PC-3 (cell line): ENCODE measurements at regions of chr7 and their contacts with region 1.

Region 1: GRCh38 chr7:114426382-114427223 is 12.0 kb downstream of the FOXP2 start:
- DNase-seq: peak; percentile 37
- ATAC-seq: peak; percentile 65; the same call in 1 of the 2 replicates
- H3K4me3 ChIP-seq: no peak overlapping the region
- H3K27ac ChIP-seq: no peak overlapping the region
- H3K4me1 ChIP-seq: no peaks in the 10 kb centered on the region
- H3K27me3 ChIP-seq: peaks cover 41% of the 10 kb centered on the region
- CTCF ChIP-seq: peak; percentile 53

Region 2: DNA sequence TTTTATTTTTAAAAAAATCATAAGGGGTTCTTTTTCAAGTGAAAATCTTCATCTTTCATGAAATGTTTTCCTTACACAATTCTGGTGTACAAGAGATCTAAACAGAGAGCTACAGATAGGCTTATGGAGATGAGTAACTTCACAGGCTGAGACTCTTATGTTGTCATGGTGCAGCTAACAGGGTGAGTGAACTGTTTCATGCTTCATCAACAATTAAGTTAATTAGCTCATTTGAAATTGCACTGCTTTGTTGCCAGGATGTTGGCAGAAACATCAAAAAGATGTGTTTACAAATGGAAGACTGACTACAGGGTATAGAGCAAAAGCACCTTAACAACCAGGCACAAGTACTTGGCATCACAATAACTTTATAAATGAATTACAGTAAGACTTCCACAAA is 218.8 kb after region 1 on chr7:
- CTCF ChIA-PET with region 1: no interaction called
- POLR2A ChIA-PET with region 1: no interaction called
- intact Hi-C with region 1: no loop called
- DNase-seq: no peak
- ATAC-seq: no peak
- H3K4me3 ChIP-seq: no peak overlapping the region
- H3K27ac ChIP-seq: no peak overlapping the region
- H3K4me1 ChIP-seq: no peaks in the 10 kb centered on the region
- H3K27me3 ChIP-seq: peaks cover 40% of the 10 kb centered on the region
- CTCF ChIP-seq: no peak

Region 3: DNA sequence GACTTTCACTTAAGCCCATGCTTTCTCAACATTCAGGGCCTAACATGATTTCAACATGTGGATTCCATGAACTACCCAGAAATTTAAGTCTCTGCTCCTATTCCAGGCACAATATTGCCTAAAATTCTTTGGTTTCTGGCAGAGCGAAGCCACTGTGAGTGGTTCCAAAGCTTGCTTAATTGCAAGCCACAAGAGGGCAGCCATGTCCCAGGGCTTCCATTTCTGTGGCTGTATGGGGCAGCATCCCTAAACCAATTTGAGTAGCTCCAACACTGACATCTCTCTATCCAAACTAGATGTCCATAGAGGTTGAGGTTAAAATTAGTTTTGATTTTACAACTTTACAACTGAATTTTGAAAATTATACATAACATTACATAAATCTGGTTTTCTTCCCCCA is 439.0 kb after region 1 on chr7:
- CTCF ChIA-PET with region 1: interaction called, 3 read pairs
- POLR2A ChIA-PET with region 1: no interaction called
- intact Hi-C with region 1: loop called (anchors 2 kb)
- DNase-seq: peak; percentile 60
- ATAC-seq: peak; percentile 82; the same call in 1 of the 2 replicates
- H3K4me3 ChIP-seq: no peak overlapping the region
- H3K27ac ChIP-seq: no peak overlapping the region
- H3K4me1 ChIP-seq: peaks cover 11% of the 10 kb centered on the region
- H3K27me3 ChIP-seq: no peaks in the 10 kb centered on the region
- CTCF ChIP-seq: peak; percentile 87